CD8-positive, alpha-beta T cell (primary cell): ENCODE measurements at regions of chr1 and their contacts with region 1.

Region 1: DNA sequence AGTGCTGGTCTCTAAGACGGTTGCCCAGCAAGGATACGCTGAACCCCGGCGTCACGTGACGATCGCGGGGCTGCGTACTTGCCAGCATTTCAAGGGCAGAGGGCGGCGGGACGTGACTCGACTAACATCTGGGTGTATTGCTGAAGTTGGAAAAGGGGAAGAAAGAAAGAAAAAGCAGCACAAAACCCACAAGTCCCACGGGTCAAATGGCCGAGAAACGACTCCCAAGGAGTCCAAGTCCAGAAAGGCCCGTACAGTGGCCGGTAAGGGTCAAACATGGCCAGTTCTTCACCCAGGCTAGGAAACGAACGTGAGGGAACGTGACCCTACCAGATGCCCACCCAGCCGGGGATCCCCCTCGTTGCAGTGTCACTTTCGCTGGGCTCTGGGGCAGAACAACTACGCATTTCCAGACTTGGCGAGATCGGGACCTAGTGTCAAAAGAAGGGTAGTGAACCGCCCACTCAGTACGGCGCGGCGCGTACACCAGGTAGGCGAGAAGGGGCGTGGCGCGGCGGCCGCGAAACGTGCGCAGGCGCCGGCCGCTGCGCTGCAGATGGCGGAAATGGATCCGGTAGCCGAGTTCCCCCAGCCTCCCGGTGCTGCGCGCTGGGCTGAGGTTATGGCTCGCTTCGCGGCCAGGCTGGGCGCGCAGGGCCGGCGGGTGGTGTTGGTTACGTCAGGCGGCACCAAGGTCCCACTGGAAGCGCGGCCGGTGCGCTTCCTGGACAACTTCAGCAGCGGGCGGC is at the starts of genes PPCS and ZMYND12:
- DNase-seq: peak; percentile 82 to 98 (median 91)
- ATAC-seq: peak; percentile 92
- H3K4me3 ChIP-seq: peak within 1 kb of the TSS; percentile 99
- H3K4me3 Mint-ChIP-seq: peak within 1 kb of the TSS; percentile 98
- H3K27ac ChIP-seq: peak within 1 kb of the TSS; percentile 99 to 100
- H3K27ac Mint-ChIP-seq: peak within 1 kb of the TSS; percentile 100
- H3K4me1 ChIP-seq: peaks cover 25% of the 10 kb centered on the region
- H3K4me1 Mint-ChIP-seq: peaks cover 37% of the 10 kb centered on the region
- H3K27me3 ChIP-seq: no peaks in the 10 kb centered on the region
- H3K27me3 Mint-ChIP-seq: no peaks in the 10 kb centered on the region
- CTCF ChIP-seq: peak; percentile 34
- total RNA-seq, gene PPCS: 38.0 to 38.1 TPM
- total RNA-seq, gene ZMYND12: 0.56 to 0.76 TPM

Region 2: GRCh38 chr1:42380586-42381279 is 75.5 kb before region 1 on chr1 and contains the start of gene RIMKLA:
- CTCF ChIA-PET with region 1: no interaction called
- POLR2A ChIA-PET with region 1: no interaction called
- intact Hi-C with region 1: loop called in 1 of 2 experiments (anchors 5 kb)
- DNase-seq: peak in 8 of 9 experiments; percentile 4 to 67 (median 34)
- ATAC-seq: peak; percentile 73
- H3K4me3 ChIP-seq: peak within 1 kb of the TSS; percentile 26 to 55
- H3K4me3 Mint-ChIP-seq: peak within 1 kb of the TSS; percentile 77
- H3K27ac ChIP-seq: no peak within 1 kb of the TSS
- H3K27ac Mint-ChIP-seq: no peak within 1 kb of the TSS
- H3K4me1 ChIP-seq: peaks cover 5% of the 10 kb centered on the region
- H3K4me1 Mint-ChIP-seq: peaks cover 10% of the 10 kb centered on the region
- H3K27me3 ChIP-seq: peaks cover 2 to 12% of the 10 kb centered on the region in 2 experiments
- H3K27me3 Mint-ChIP-seq: peaks cover 54% of the 10 kb centered on the region
- CTCF ChIP-seq: no peak
- total RNA-seq, gene RIMKLA: 0.05 to 0.06 TPM

Region 3: GRCh38 chr1:42593486-42594100 is 137.4 kb after region 1 on chr1:
- CTCF ChIA-PET with region 1: no interaction called
- POLR2A ChIA-PET with region 1: no interaction called
- intact Hi-C with region 1: no loop called
- DNase-seq: no peak
- ATAC-seq: no peak
- H3K4me3 ChIP-seq: no peak overlapping the region
- H3K4me3 Mint-ChIP-seq: no peak overlapping the region
- H3K27ac ChIP-seq: no peak overlapping the region
- H3K27ac Mint-ChIP-seq: no peak overlapping the region
- H3K4me1 ChIP-seq: no peaks in the 10 kb centered on the region
- H3K4me1 Mint-ChIP-seq: no peaks in the 10 kb centered on the region
- H3K27me3 ChIP-seq: no peaks in the 10 kb centered on the region
- H3K27me3 Mint-ChIP-seq: no peaks in the 10 kb centered on the region
- CTCF ChIP-seq: no peak

Region 4: DNA sequence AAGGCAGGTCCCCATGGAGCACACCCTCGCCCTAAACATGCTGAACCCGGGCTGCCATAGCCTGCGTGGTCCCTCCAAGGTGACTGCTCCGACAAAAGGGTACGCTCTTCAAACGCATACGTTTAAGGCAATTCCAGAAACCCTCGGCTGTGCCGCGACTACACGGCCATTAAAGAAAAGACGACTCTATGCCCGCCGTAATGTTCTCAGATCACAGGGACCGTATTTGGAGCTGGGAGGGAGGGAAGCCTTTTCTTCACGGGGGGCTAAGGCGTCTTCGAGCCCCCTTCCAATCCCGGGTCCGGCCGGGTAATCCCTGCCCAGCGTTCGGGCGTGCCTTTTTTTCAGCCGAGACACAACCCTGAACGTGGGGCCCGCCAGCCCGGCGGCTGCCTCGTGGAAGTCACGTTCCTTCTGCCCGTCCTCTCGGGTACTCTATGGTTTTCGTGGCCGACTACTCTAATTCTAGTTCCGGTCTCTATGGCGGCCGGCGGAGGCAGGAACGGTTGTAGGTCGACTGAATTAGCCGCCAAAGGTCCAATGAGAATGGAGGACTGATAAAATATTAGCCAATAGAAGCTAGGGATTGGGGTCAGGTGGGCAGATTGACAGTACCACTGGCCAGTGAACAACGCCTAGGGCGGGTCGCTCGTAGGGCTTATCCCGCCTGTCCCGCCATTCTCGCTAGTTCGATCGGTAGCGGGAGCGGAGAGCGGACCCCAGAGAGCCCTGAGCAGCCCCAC is 225.7 kb after region 1 on chr1 and contains the start of gene YBX1:
- CTCF ChIA-PET with region 1: no interaction called
- POLR2A ChIA-PET with region 1: interaction called, 3 read pairs
- intact Hi-C with region 1: loop called in 1 of 2 experiments (anchors 1 kb)
- DNase-seq: peak; percentile 88 to 98 (median 95)
- ATAC-seq: peak; percentile 89
- H3K4me3 ChIP-seq: peak within 1 kb of the TSS; percentile 81 to 84
- H3K4me3 Mint-ChIP-seq: peak within 1 kb of the TSS; percentile 99
- H3K27ac ChIP-seq: peak within 1 kb of the TSS; percentile 82 to 88
- H3K27ac Mint-ChIP-seq: peak within 1 kb of the TSS; percentile 97
- H3K4me1 ChIP-seq: peaks cover 43% of the 10 kb centered on the region
- H3K4me1 Mint-ChIP-seq: peaks cover 58% of the 10 kb centered on the region
- H3K27me3 ChIP-seq: no peaks in the 10 kb centered on the region
- H3K27me3 Mint-ChIP-seq: no peaks in the 10 kb centered on the region
- CTCF ChIP-seq: no peak
- total RNA-seq, gene YBX1: 440 to 450 TPM

Region 5: DNA sequence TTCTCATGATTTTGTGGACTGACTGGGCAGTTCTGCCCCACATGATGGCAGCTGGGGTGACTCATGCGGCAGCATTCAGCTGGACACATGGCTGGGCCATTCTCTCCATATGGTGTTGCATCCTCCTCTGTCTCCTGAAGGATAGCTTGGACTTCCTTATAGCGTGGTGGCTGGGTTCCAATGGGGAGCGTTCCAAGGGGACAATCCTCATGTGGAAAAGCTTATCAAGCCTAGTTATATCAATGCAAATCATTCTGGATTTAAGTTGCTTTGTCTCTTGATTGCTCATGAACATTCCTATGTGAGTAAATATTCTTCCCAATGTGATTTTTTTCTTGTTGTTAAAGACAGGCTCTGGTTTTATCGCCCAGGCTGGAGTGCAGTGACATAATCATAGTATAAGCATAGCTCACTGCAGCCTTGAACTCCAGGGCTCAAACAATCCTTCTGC is 515.7 kb after region 1 on chr1:
- CTCF ChIA-PET with region 1: no interaction called
- POLR2A ChIA-PET with region 1: no interaction called
- intact Hi-C with region 1: no loop called
- DNase-seq: no peak
- ATAC-seq: no peak
- H3K4me3 ChIP-seq: no peak overlapping the region
- H3K4me3 Mint-ChIP-seq: no peak overlapping the region
- H3K27ac ChIP-seq: no peak overlapping the region
- H3K27ac Mint-ChIP-seq: no peak overlapping the region
- H3K4me1 ChIP-seq: no peaks in the 10 kb centered on the region
- H3K4me1 Mint-ChIP-seq: no peaks in the 10 kb centered on the region
- H3K27me3 ChIP-seq: no peaks in the 10 kb centered on the region
- H3K27me3 Mint-ChIP-seq: no peaks in the 10 kb centered on the region
- CTCF ChIP-seq: no peak